Vagina (tissue), 2 donors: ENCODE measurements at regions of chr17 and their contacts with region 1.

Region 1: GRCh38 chr17:48186812-48187211 is 79.2 kb downstream of the SNX11 start:
- DNase-seq: no peak
- H3K4me3 ChIP-seq: no peak overlapping the region
- H3K27ac ChIP-seq: no peak overlapping the region
- H3K4me1 ChIP-seq: no peaks in the 10 kb centered on the region
- H3K27me3 ChIP-seq: no peaks in the 10 kb centered on the region
- CTCF ChIP-seq: no peak
- POLR2A ChIP-seq: no peak

Region 2: DNA sequence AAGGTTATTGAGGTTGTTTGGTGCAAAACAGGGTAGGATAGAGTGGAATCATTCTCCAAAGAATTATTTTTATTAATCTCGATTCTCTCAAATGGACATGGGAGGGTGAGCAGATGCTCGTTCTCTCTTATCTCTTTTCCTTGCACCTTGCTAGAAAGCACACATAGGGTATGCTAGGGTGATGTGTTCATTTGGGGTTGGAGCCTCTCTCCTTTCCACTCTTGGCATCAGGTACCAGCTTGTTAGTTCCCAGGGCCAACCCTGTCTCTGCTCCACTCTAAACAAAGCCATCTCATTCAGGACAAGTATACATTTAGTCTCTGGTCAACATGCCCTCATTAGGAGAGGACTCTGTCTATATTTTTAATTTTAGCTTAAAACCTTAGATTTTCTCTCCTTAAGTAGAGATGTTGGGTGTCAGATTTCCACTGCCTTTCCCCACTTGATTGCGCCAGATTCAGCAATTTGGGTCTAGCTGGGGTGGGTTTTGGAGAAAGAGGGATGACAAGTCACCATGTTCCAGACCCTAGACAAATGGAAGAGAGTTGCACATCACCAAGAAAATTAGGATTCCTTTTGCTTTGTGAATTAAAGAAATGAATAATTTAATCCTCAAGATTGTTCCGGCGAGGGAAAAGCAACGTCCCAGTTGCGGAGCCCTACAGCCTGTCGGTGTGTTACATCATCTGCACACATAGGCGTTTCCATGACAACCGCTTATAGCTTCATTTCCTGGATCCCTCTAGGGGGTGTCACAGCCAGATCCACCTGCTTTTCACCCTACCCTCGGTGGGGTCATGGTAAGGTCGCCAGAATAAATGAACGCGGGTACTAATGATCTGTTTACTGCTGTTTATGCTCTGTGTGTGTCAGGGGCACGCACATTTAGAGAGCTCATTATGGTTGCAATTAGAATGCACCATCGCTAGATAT is 37.7 kb before region 1 on chr17:
- intact Hi-C with region 1: loop called (anchors 1 kb)
- DNase-seq: no peak
- H3K4me3 ChIP-seq: no peak overlapping the region
- H3K27ac ChIP-seq: no peak overlapping the region
- H3K4me1 ChIP-seq: no peaks in the 10 kb centered on the region
- H3K27me3 ChIP-seq: no peaks in the 10 kb centered on the region
- CTCF ChIP-seq: no peak
- POLR2A ChIP-seq: no peak

Region 3: GRCh38 chr17:48162946-48163506 is 23.8 kb before region 1 on chr17:
- intact Hi-C with region 1: no loop called
- DNase-seq: no peak
- H3K4me3 ChIP-seq: no peak overlapping the region
- H3K27ac ChIP-seq: no peak overlapping the region
- H3K4me1 ChIP-seq: no peaks in the 10 kb centered on the region
- H3K27me3 ChIP-seq: no peaks in the 10 kb centered on the region
- CTCF ChIP-seq: no peak
- POLR2A ChIP-seq: no peak